ENCODE measurements at regions of chr6 and their contacts with region 1.

Region 1: GRCh38 chr6:31087494-31088089 is 24.8 kb downstream of the C6orf15 start:
- DNase-seq: peak; percentile 78
- ATAC-seq: peak; percentile 95
- H3K4me3 ChIP-seq: no peak overlapping the region
- H3K27ac ChIP-seq: no peak overlapping the region
- H3K4me1 ChIP-seq: peaks cover 26% of the 10 kb centered on the region
- H3K27me3 ChIP-seq: peaks cover 1 to 15% of the 10 kb centered on the region in 2 experiments; a peak in 2 of 5 replicates
- CTCF ChIP-seq: peak; percentile 91
- EP300 ChIP-seq: no peak
- POLR2A ChIP-seq: no peak
- RAD21 ChIP-seq: peak; percentile 80

Region 2: GRCh38 chr6:30453508-30454116 is 634.0 kb before region 1 on chr6:
- CTCF ChIA-PET with region 1: no interaction called
- POLR2A ChIA-PET with region 1: no interaction called
- in situ Hi-C with region 1: loop called (anchors 25 kb)
- intact Hi-C with region 1: no loop called
- DNase-seq: peak; percentile 84
- ATAC-seq: peak; percentile 89
- H3K4me3 ChIP-seq: no peak overlapping the region
- H3K27ac ChIP-seq: no peak overlapping the region
- H3K4me1 ChIP-seq: peaks cover 17% of the 10 kb centered on the region
- H3K27me3 ChIP-seq: peaks cover 21 to 77% of the 10 kb centered on the region in 2 experiments; a peak in 4 of 5 replicates
- CTCF ChIP-seq: peak; percentile 91
- EP300 ChIP-seq: no peak
- POLR2A ChIP-seq: no peak
- RAD21 ChIP-seq: peak; percentile 86

Region 3: DNA sequence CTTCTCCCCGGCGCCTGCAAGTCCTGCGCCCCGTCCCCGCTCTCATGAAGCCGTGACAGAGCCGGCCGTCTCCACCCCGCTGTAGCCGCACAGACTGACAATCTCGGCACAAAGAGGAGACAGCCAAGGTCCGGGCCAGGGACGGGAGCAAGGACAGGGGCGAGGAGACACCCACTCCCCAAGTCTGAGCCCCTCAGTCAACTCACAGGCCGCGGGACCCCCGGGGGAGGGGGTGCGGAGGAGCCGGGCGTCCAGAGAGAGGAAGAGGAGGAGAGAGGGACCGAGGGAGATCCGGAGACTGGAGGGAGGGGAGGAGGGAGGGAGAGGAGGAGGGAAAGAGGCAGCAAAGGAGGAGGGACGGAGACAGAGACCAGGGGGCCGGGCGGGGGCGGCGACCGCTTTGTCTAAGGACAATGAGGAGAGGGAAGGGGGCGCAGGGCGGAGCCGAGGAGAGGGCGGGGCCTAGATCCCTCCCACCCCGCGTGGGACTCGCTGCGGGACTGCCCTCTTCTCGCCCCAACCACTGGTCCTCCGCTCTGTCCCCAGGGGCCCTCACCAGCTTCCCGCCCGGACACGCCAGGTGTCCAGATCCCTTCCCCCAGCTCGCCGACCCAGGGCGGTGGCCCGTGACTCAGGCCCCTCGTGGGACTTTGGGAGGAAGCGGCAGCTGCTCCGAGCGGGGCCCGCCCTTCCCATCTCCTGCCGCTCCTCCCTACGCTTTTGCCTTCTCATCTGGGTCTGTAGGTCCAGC is 400.5 kb before region 1 on chr6:
- CTCF ChIA-PET with region 1: no interaction called
- POLR2A ChIA-PET with region 1: no interaction called
- in situ Hi-C with region 1: loop called (anchors 25 kb)
- intact Hi-C with region 1: no loop called
- DNase-seq: peak; percentile 49
- ATAC-seq: peak; percentile 50
- H3K4me3 ChIP-seq: peak overlapping the region; percentile 77 to 84 (median 81)
- H3K27ac ChIP-seq: peak overlapping the region; percentile 43
- H3K4me1 ChIP-seq: peaks cover 79% of the 10 kb centered on the region
- H3K27me3 ChIP-seq: no peaks in the 10 kb centered on the region
- CTCF ChIP-seq: peak; percentile 6; the same call in 1 of the 2 replicates
- EP300 ChIP-seq: peak in 1 of 2 experiments; percentile 55; a peak in 1 of 4 replicates
- POLR2A ChIP-seq: peak in 1 of 2 experiments; percentile 67; a peak in 3 of 4 replicates
- RAD21 ChIP-seq: no peak

Region 4: DNA sequence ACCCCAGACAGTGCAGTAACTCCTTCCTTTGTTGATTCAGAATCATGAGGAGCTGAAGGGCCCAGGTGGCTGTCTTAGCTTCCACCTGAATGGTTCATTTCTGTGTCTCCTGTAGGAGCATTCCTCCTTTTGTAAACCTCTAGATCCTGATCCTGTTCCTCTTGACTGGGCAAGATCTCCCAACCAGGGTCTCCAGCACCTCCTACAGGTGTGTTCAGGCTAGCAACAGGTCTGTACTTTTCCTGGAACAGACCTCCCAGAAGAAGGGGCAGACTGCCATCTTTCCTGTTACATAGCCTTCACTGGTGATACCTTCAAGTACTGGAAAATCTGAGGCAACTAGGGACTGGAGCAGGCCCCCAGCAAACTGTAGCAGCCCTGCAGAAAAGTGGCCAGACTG is 234.2 kb after region 1 on chr6:
- CTCF ChIA-PET with region 1: no interaction called
- POLR2A ChIA-PET with region 1: no interaction called
- in situ Hi-C with region 1: no loop called
- intact Hi-C with region 1: no loop called
- DNase-seq: no peak
- ATAC-seq: no peak
- H3K4me3 ChIP-seq: no peak overlapping the region
- H3K27ac ChIP-seq: no peak overlapping the region
- H3K4me1 ChIP-seq: no peaks in the 10 kb centered on the region
- H3K27me3 ChIP-seq: peaks cover 0 to 2% of the 10 kb centered on the region in 2 experiments; a peak in 1 of 5 replicates
- CTCF ChIP-seq: peak; percentile 45
- EP300 ChIP-seq: no peak
- POLR2A ChIP-seq: no peak
- RAD21 ChIP-seq: no peak

Measured in HepG2 (cell line).